Mammary epithelial cell (primary cell): ENCODE measurements at regions of chr9 and their contacts with region 1.

Region 1: DNA sequence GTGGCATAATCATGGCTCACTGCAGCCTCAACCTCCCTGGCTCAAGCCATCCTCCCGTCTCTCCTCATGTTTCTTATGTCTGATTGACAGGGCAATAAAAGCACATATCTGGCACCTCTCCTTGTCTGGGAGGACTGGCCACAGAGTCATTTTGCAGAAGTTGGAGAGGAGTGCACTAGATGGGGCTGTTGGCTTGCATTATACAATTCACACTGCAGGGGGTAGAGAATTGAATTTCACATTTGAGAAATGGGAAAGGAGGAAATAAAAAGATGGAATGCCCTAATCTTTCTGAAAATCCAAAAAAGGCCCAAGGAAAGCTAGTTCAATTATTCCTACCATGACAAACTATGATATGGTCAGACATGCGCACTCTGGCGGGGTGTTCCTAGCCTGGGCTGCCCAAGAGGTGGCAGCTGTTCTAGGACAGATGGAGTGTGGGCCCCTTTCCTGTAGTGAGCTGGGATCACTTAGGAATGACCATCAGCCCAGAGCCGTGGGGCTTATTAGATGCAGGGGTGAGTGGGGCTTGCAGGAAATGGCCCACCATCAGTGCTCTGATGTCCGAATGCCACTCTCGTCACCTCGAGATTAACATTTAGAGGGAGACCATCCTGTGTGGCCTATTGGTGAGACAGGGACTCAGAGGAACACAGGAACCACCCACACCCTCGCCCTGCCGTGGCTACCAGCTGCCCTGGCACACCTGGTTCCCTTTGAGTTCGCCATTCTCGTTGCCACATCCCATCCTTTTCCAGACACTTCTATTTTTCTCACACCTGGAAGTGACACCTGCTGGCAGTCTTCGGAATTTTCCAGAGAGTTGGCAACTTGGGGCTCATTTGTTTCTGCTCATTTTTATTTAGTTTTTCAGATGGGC is 21.8 kb upstream of the ANKRD18A start:
- DNase-seq: peak; percentile 34
- H3K4me3 ChIP-seq: no peak overlapping the region
- H3K27ac ChIP-seq: no peak overlapping the region
- H3K4me1 ChIP-seq: no peaks in the 10 kb centered on the region
- H3K27me3 ChIP-seq: no peaks in the 10 kb centered on the region
- CTCF ChIP-seq: peak; percentile 53 to 64

Region 2: DNA sequence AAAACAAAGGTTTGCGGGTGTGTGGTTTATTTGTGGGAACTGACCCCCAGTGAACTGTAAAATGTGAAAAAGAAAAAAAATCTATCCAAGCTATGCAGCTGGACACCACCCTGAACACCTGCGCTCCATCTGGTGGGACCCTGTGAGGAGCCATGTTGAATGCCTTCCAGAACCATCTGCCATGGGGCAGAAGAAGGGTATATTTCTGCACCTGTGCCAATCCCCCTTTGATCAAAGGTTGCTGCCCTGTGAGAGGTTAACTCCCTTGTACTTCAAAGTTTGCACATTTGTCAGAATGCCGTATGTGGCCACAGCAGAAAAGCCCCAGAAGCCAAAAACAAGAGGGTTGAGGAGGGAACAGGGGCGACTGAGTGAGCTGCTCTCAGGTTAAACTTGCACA is 398.2 kb before region 1 on chr9:
- CTCF ChIA-PET with region 1: no interaction called
- dilution Hi-C with region 1: no loop called
- in situ Hi-C with region 1: no loop called
- intact Hi-C with region 1: no loop called
- DNase-seq: no peak
- H3K4me3 ChIP-seq: no peak overlapping the region
- H3K27ac ChIP-seq: no peak overlapping the region
- H3K4me1 ChIP-seq: no peaks in the 10 kb centered on the region
- H3K27me3 ChIP-seq: no peaks in the 10 kb centered on the region
- CTCF ChIP-seq: no peak

Region 3: GRCh38 chr9:38620483-38621433 is 21.5 kb before region 1 on chr9 and contains the start of gene ANKRD18A:
- CTCF ChIA-PET with region 1: interaction called, 4 read pairs
- dilution Hi-C with region 1: no loop called
- in situ Hi-C with region 1: no loop called
- intact Hi-C with region 1: loop called (anchors 1 kb)
- DNase-seq: peak; percentile 95
- H3K4me3 ChIP-seq: peak within 1 kb of the TSS; percentile 63 to 84 (median 69)
- H3K27ac ChIP-seq: peak within 1 kb of the TSS; percentile 19
- H3K4me1 ChIP-seq: peaks cover 17% of the 10 kb centered on the region
- H3K27me3 ChIP-seq: no peaks in the 10 kb centered on the region
- CTCF ChIP-seq: peak; percentile 47 to 84
- total RNA-seq, gene ANKRD18A: 1.8 to 10.4 TPM

Region 4: DNA sequence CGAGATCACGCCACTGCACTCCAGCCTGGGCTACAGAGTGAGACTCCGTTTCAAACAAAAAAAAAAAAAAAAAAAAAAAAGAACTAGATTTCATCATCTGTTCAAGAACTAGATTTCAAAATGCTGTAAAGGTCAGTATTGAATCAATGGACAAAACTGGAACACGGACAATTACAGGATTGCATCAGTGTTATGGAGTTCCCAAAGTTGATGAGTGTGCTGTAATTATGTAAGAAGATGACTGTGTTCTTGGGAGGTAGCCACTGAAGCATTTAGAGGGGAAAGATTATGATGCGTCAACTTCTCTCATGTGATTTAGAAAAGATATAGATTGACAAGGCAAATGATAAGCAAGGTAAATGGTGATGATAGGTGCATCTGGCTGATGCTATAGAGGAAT is 71.2 kb after region 1 on chr9:
- CTCF ChIA-PET with region 1: no interaction called
- dilution Hi-C with region 1: loop called (anchors 10 kb)
- in situ Hi-C with region 1: no loop called
- intact Hi-C with region 1: no loop called
- DNase-seq: peak; percentile 96
- H3K4me3 ChIP-seq: no peak overlapping the region
- H3K27ac ChIP-seq: no peak overlapping the region
- H3K4me1 ChIP-seq: no peaks in the 10 kb centered on the region
- H3K27me3 ChIP-seq: no peaks in the 10 kb centered on the region
- CTCF ChIP-seq: no peak